ENCODE measurements at regions of chr1 and their contacts with region 1.

Region 1: DNA sequence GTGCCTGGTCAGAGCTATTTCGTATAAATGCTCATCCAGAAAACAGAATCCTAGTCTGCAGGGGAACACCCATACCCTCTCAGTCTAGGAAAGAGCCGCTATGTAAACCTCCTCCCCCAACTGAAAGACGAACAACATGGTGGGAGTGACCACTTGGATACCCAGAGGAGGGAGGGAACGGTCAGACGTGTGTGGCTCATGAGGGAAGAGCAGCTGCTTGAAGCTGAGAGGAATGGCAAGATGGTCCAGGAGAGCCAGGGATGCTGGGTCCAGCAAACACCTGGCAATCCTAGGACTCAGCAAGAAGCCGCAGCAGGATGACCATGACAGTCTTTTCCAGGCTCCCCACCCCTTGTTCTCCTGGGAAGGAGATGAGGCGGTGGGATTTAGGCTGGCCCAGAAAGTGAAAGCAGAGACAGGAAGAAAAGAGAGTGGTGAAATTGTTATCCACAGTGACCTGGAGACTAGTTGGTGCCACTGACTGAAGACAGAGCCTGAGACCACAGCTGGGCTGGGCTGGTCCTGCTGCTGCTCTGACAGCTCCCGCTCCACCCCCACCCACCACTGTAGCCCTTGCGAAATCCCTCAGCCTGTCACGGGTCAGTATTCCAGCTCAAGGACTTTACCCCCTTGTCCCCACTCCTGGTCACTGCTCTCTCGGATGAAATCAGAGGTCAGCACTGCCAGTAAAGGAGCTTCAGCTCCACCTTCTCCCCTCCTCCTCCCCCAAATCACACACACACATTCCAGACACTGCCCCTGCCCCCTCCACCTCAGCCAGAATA is 3.6 kb downstream of the CERS2 start:
- DNase-seq: peak in 6 of 10 donors; percentile 31 to 68 (median 44)
- H3K4me3 ChIP-seq: peak overlapping the region in 27 of 59 donors; percentile 0 to 92 (median 25)
- H3K27ac ChIP-seq: peak overlapping the region in 58 of 59 donors; percentile 21 to 99 (median 96)
- H3K27me3 ChIP-seq: no peaks in the 10 kb centered on the region
- CTCF ChIP-seq: no peak

Region 2: DNA sequence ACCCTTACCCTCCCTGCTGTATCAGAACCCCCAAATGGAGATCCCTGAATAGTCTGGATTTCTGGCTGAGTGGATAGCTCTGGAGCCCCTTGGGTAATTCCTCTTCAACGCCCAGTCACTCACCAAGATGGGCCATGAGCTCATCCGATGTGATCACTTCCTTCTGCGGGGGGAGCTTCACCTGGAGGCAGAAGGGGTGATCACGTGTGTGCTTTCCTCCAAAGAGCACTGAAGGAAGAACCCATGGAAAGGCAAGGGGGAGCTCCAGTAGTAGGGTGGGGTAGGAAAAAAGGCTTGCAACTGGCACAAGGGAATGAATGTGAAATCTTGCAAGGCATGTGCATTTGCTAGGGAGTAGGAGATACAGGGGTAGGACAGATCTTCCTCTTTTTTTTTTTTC is 30.6 kb after region 1 on chr1:
- intact Hi-C with region 1: loop called (anchors 1 to 2 kb)
- DNase-seq: no peak
- H3K4me3 ChIP-seq: peak overlapping the region in 1 of 59 donors; percentile 2
- H3K27ac ChIP-seq: peak overlapping the region in 34 of 59 donors; percentile 6 to 99 (median 96)
- H3K27me3 ChIP-seq: no peaks in the 10 kb centered on the region
- CTCF ChIP-seq: no peak

Measured in dorsolateral prefrontal cortex (tissue), 120 donors.